ENCODE measurements at regions of chr16 and their contacts with region 1.

Region 1: DNA sequence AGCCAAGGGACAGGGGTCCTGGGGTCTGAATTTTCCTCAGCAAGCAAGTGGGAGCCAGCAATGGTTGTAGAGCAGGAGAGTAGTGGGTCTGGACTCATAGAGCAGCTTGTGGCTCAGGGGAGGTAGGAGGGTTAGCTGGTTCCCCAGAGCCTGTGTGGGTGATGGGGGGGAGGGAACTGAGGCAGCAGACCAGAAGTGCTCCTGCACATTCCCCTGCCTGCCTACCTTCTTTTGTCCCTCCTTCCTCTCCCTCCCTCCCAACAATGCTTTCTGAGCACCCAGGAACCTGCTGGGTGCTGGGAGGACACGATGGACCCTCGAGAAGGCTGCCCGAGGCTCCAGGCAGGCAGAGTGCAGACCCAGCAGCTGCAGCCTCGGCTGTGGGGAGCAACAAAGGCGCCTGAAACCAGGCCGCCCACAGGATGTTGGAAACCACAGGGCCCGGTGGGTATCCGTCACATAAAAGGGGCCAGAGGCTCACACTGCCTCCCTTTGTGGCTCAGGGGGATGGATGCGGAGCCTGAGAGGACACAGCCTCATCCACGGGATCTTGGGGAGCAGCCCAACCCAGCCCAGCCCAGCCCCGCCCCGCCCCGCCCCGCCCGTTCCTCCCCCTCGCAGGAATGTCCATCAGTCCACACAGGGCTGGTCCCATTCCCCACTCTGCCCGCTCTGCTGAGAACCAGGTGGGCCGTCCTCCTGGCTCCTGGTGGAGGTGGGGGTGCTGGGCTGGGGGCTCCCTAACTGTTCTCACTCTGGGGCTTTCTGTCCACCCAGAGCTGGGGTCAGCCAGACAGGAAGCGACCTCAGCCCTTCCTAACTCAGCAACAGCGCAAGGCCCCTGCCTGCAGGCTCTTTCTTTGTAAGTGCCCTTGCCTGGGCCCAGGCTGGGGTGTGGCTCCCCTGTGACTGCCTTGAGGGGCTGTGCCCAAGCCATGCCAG is 1.7 kb upstream of the NLRC3 start:
- DNase-seq: peak; percentile 82
- ATAC-seq: peak; percentile 68
- H3K4me3 Mint-ChIP-seq: peak overlapping the region; percentile 95
- H3K27ac Mint-ChIP-seq: peak overlapping the region; percentile 97
- H3K4me1 Mint-ChIP-seq: peaks cover 45% of the 10 kb centered on the region
- H3K27me3 Mint-ChIP-seq: no peaks in the 10 kb centered on the region

Region 2: GRCh38 chr16:3509470-3509928 is 69.4 kb before region 1 on chr16:
- CTCF ChIA-PET with region 1: no interaction called
- POLR2A ChIA-PET with region 1: no interaction called
- intact Hi-C with region 1: loop called (anchors 2 to 5 kb)
- DNase-seq: peak; percentile 92
- ATAC-seq: peak; percentile 86
- H3K4me3 Mint-ChIP-seq: peak overlapping the region; percentile 8
- H3K27ac Mint-ChIP-seq: peak overlapping the region; percentile 91
- H3K4me1 Mint-ChIP-seq: peaks cover 54% of the 10 kb centered on the region
- H3K27me3 Mint-ChIP-seq: no peaks in the 10 kb centered on the region

Region 3: DNA sequence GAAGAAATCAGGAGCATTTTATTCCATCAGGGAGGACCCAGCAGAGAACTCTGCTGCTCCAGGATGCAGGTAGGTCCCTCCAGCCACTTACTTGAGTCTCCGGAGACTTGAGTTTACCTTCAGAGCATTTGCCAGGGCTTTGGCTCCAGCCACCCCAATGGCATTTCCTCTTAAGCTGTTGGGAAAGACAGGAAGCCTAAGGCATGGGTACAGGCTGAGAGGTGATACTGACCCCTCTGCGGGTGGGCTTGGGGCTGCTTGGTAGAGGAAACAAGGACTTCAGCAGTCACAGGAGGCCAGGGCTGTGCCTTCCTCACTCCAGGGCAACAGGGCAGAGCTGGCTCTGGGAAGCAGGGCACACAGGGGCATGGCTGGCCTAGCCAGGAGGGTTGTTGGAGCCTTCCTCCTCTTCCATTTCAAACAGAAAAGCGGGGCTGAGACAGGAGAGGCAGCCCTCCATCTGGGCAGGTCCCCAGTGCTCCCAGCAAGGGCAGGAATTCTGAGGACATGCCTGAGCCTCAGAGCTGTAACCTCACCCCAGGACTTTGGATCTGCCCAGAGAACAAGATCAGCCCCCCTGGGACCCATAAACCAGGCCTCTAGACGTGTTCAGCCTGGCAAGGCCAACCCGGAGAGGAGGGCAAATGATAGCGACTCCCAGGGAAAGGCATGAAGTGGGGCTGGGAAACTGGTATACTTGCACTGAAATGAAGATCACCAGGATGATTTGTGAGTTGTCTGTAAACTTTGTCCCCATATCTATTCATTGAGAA is 36.1 kb before region 1 on chr16:
- CTCF ChIA-PET with region 1: no interaction called
- POLR2A ChIA-PET with region 1: no interaction called
- intact Hi-C with region 1: no loop called
- DNase-seq: no peak
- ATAC-seq: no peak
- H3K4me3 Mint-ChIP-seq: no peak overlapping the region
- H3K27ac Mint-ChIP-seq: no peak overlapping the region
- H3K4me1 Mint-ChIP-seq: no peaks in the 10 kb centered on the region
- H3K27me3 Mint-ChIP-seq: no peaks in the 10 kb centered on the region

Region 4: DNA sequence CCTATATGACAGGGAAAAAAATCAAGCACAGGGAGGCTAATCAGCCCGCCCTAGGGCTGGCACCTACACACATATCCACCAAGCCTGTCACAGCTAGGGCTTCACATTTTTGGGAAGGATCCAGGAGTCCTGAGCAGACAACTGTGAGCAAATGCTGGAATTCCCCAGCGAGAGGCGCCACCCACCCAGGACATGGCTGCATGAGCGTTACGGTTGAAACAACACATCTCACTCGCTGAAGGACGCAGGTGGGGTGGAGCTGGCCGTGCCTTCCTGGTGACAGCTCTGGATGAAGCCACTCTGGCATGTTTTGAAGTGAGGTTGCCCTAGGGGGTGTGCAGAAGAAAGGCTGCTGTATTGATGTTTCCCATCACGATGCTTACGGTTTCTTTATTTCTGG is 1833.8 kb after region 1 on chr16:
- CTCF ChIA-PET with region 1: no interaction called
- POLR2A ChIA-PET with region 1: no interaction called
- intact Hi-C with region 1: no loop called
- DNase-seq: peak; percentile 6
- ATAC-seq: no peak
- H3K4me3 Mint-ChIP-seq: no peak overlapping the region
- H3K27ac Mint-ChIP-seq: no peak overlapping the region
- H3K4me1 Mint-ChIP-seq: no peaks in the 10 kb centered on the region
- H3K27me3 Mint-ChIP-seq: peaks cover 3% of the 10 kb centered on the region